Activated naive CD4-positive, alpha-beta T cell treated with anti-CD3 and anti-CD28 coated beads for 36 hours (primary cell): ENCODE measurements at regions of chr17 and their contacts with region 1.

Region 1: DNA sequence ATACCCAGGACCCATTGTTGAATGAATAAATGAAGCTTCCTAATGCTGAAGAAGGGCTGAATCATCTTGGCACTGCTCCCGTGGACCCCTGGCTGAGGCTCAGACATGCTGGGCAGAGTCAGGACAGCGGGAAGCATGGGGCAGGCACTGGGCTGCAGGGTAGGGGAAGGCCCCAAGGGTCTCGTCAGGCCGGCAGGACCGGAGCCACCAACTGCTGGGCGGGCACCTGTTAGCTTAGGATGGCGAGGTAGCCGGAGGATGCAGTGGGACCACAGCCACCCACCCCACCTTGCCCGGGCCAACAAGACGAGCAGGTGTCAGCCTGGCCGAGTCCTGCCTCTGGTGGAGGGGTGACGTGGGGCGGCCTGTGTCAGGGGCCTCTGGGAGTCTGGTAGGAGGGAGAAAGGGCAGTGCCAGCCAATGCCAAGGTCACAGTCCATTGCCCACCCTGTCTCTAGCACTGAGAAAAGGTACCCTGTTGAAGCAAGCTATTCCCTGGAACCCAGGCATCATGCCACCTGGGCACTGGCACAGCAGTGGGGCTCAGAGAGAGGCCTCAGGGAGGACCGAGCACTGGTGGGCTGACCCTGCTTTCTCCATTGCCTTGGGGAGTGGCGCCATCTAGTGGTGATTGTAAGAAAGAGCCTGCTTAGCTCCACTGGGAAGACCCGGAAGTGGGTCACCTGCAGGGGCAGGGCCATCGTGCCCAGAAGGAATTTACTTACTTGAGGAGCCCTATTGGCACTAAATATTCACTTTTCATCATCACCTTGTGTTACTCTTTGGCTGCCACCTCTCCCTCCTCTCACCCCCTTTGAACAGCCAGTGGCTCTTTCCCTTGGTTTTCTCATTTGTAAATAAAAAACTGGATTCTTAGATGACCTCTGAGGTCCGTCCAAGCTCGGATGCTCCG is 3.0 kb upstream of the DLX3 start:
- DNase-seq: peak; percentile 92
- H3K4me3 Mint-ChIP-seq: no peak overlapping the region
- H3K27ac Mint-ChIP-seq: no peak overlapping the region
- H3K4me1 Mint-ChIP-seq: peaks cover 25% of the 10 kb centered on the region
- H3K27me3 Mint-ChIP-seq: peaks cover 61% of the 10 kb centered on the region

Region 2: DNA sequence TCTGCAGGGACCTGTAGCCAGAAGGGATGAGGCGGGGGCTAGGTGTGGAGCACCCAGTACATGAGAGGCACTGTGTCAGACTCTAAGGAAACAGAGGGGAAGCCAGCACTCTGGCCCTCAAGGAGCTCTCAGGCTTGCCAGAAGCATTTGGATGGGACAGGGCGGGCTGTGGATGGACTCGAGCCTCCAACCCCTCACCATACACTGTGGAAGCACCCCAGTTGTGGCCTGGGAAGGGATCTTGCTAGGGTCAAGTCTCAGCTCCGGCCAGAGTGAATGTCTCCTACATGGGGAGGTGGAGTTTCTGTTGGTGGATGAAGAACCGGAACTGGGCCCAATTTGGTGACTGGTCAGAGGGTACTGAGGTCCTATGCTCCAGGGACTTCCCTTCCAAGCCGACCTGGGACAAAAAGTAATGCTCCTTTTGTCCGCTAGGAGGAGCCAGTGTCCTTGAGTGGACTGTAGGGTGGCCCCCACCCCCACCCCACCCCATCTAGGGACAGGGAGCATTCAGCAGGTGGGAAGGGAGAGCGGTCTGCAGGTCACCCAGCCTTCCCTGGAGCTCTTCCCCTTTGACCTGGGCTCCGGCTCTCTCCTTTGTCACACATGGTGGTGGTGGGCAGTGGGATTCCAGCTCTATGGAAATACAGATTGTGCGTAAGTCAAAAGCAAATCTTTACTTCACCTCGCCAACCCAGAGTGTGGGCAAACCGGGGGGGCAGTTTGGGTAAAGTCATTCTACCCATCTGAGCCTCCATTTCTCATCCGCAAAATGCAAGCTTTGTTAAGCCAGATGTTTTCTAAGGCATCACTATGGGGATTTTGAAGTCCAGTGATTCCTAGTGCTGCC is 563.0 kb before region 1 on chr17:
- CTCF ChIA-PET with region 1: no interaction called
- intact Hi-C with region 1: no loop called
- DNase-seq: peak; percentile 58
- H3K4me3 Mint-ChIP-seq: no peak overlapping the region
- H3K27ac Mint-ChIP-seq: no peak overlapping the region
- H3K4me1 Mint-ChIP-seq: no peaks in the 10 kb centered on the region
- H3K27me3 Mint-ChIP-seq: peaks cover 14% of the 10 kb centered on the region

Region 3: DNA sequence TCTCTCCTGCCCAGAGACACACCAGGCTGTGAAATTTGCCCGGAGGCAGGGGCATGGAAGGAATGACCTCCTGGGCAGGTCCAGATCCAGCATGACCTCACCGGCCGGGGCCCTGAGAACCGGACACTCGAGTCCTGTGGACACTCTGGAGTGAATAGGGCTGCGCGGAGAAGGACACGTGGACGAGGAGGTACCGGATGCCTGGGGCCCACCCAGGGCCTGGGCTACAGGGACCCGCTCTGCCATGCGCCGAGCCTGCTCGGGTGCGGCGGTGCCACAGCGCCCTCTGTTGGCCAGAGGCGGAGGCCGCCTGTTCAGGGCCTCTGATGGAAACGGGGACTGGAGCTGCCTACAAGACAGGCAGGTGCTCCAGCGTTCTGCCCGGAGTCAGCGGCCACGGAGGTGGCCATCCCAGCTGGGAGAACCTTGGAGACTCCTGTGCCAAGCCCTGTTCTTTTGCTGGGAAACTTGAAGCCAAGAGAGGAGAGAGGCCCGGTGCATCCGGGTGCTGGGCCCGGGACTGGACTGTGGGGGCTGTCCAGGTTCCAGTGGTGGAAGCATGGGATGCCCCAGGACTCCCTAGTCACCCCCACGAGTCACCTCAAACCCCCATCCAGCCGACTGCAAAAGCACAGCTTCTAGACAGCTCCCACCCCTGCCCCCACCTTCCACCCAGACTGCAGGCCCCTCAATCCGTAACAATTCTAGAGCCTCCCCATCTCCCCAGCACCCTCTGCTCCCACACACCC is 441.6 kb before region 1 on chr17:
- CTCF ChIA-PET with region 1: interaction called, 28 read pairs
- intact Hi-C with region 1: no loop called
- DNase-seq: peak; percentile 87
- H3K4me3 Mint-ChIP-seq: no peak overlapping the region
- H3K27ac Mint-ChIP-seq: no peak overlapping the region
- H3K4me1 Mint-ChIP-seq: peaks cover 5% of the 10 kb centered on the region
- H3K27me3 Mint-ChIP-seq: peaks cover 2% of the 10 kb centered on the region

Region 4: GRCh38 chr17:49861150-49861892 is 136.7 kb before region 1 on chr17:
- CTCF ChIA-PET with region 1: interaction called, 150 read pairs
- intact Hi-C with region 1: loop called (anchors 1 kb)
- DNase-seq: peak; percentile 58
- H3K4me3 Mint-ChIP-seq: no peak overlapping the region
- H3K27ac Mint-ChIP-seq: no peak overlapping the region
- H3K4me1 Mint-ChIP-seq: peaks cover 3% of the 10 kb centered on the region
- H3K27me3 Mint-ChIP-seq: peaks cover 3% of the 10 kb centered on the region

Region 5: GRCh38 chr17:49899191-49899485 is 98.9 kb before region 1 on chr17:
- CTCF ChIA-PET with region 1: interaction called, 17 read pairs
- intact Hi-C with region 1: loop called (anchors 1 kb)
- DNase-seq: no peak
- H3K4me3 Mint-ChIP-seq: no peak overlapping the region
- H3K27ac Mint-ChIP-seq: no peak overlapping the region
- H3K4me1 Mint-ChIP-seq: no peaks in the 10 kb centered on the region
- H3K27me3 Mint-ChIP-seq: peaks cover 54% of the 10 kb centered on the region

Region 6: GRCh38 chr17:49952209-49952911 is 45.7 kb before region 1 on chr17:
- CTCF ChIA-PET with region 1: interaction called, 184 read pairs
- intact Hi-C with region 1: loop called (anchors 1 kb)
- DNase-seq: peak; percentile 93
- H3K4me3 Mint-ChIP-seq: no peak overlapping the region
- H3K27ac Mint-ChIP-seq: no peak overlapping the region
- H3K4me1 Mint-ChIP-seq: no peaks in the 10 kb centered on the region
- H3K27me3 Mint-ChIP-seq: peaks cover 24% of the 10 kb centered on the region

Region 7: GRCh38 chr17:49976163-49976827 is 21.8 kb before region 1 on chr17:
- CTCF ChIA-PET with region 1: interaction called, 51 read pairs
- intact Hi-C with region 1: no loop called
- DNase-seq: no peak
- H3K4me3 Mint-ChIP-seq: no peak overlapping the region
- H3K27ac Mint-ChIP-seq: no peak overlapping the region
- H3K4me1 Mint-ChIP-seq: peaks cover 10% of the 10 kb centered on the region
- H3K27me3 Mint-ChIP-seq: peaks cover 36% of the 10 kb centered on the region

Region 8: DNA sequence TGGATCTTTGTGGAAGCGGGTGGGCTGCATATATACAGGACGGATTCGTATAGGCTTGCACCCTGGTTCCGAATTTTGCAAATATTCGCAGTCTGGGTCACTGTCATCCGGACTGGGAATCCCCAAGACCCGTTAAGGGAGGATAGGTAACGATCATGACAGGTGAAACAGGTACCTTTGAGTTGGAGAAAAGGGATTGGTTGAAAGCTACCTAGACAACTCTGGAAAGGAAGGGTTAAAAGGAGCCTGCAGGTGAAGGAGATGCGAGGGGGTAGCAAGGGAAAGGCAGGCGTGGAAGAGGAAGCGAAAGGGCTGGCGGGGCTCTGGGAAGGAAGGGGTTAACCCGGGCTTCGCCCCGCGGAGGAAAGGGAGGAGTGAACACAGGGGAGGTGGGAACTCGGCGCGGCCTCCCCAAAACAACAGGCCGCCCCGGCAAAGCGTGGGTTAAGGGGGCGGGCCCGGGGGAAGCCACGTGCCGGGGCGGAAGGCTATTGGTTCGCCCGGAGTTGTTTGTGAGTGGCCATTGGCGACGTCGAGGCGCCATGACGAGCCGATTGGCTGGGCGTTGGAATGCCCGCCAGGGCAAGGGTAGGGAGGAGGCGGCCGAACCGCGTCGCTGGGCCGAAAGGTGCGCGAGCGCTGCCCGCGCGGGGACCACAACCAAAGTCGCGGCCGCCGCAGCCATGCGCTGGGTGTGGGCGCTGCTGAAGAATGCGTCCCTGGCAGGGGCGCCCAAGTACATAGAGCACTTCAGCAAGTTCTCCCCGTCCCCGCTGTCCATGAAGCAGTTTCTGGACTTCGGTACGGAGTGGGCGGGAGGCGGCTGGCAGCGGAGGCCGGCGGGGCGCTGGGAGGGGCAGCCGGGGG is 96.9 kb after region 1 on chr17 and contains the start of gene PDK2:
- CTCF ChIA-PET with region 1: interaction called, 34 read pairs
- intact Hi-C with region 1: no loop called
- DNase-seq: peak; percentile 95
- H3K4me3 Mint-ChIP-seq: peak within 1 kb of the TSS; percentile 82
- H3K27ac Mint-ChIP-seq: peak within 1 kb of the TSS; percentile 90
- H3K4me1 Mint-ChIP-seq: peaks cover 16% of the 10 kb centered on the region
- H3K27me3 Mint-ChIP-seq: no peaks in the 10 kb centered on the region
- total RNA-seq, gene PDK2: 10.5 to 11.1 TPM